OCI-LY7 (cell line): ENCODE measurements at regions of chr1 and their contacts with region 1.

Region 1: GRCh38 chr1:113677250-113678158 is 81.8 kb downstream of the PHTF1 start:
- DNase-seq: peak; percentile 56
- H3K4me3 ChIP-seq: no peak overlapping the region
- H3K27ac ChIP-seq: no peak overlapping the region
- H3K4me1 ChIP-seq: no peaks in the 10 kb centered on the region
- CTCF ChIP-seq: peak; percentile 90

Region 2: DNA sequence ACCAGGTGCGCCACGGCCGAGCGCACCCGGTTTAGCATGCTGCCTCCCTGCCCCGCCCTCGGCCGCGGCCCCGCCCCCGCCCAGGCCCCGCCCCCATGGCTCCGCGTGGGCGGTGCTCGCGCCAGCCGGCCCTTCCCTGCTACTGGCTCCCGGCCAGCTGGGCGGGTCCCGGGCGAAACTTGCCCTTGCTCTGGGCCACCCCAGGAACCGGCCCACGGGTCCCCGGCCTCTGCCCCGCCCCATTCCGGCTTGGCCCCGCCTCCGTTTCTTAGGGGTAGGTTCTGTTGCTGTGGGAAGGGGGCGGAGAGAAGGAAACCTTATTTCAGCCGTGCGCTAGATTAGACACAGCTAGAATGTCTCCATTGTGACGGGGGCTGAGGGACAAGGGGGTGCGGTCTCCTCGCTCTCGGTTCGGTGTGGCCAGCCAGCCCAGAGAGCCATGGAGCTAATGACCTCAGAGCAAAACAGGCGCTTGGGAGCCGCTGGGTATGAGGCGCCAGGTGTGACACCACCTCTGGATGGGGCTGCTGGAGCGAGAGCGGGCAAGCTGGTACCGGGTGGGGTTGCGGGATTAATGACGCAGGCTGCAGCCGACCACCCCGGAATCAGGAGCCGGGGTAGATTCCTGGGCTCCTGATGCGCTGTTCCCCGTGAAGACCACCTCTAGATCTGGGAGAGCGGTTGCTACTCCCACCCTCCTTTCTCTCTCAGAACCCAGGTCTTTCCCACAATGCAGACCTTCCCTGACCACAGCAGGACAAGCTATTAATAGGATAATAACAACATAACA is 962.0 kb before region 1 on chr1 and contains the start of gene PPM1J:
- CTCF ChIA-PET with region 1: no interaction called
- POLR2A ChIA-PET with region 1: no interaction called
- intact Hi-C with region 1: loop called (anchors 5 kb)
- DNase-seq: peak; percentile 94
- H3K4me3 ChIP-seq: peak within 1 kb of the TSS; percentile 78
- H3K27ac ChIP-seq: no peak within 1 kb of the TSS
- H3K4me1 ChIP-seq: peaks cover 20% of the 10 kb centered on the region
- CTCF ChIP-seq: no peak
- total RNA-seq, gene PPM1J: 1.4 and 1.5 TPM in 2 replicates

Region 3: DNA sequence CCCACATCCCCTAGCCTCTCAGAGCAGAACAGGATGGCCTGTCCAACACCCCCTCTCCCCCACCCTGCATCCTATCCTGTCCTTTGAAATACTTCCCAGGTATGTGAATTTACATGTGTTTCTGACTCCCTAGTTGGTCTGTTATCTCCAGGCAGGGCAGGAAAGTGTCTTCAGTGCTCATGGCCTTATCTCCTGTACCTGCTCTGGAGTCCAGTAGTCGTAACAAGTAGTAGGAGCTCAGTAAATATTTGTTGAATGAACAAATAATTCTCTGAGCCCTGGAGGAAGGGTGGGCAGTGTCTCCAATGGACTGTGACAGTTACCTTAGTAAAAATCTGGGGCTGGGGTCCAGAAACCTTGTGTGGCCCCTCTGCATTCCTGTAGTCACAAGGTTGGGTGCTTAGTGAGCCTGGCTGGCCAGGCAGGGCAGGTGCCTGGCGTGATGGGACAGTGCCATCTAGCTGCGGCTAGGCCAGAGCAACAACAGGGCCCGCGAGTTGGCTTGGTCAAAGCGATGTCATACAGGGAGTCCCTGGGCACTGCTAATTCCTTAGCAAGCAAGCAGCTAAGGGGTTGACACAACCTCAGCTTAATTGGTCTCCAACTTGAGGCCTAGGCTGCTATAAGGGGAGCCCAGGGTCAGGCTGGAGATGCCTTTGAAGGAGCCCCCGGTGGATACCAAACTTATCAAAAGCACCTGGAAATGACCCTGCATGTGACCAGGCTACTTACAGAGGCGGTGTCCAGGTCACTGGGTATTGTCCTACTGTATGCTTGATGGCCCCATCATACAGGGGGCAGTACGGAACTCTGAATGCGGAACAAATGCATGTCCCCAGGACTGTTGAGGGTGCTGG is 873.4 kb before region 1 on chr1:
- CTCF ChIA-PET with region 1: no interaction called
- POLR2A ChIA-PET with region 1: interaction called, 3 read pairs
- intact Hi-C with region 1: loop called (anchors 10 kb)
- DNase-seq: peak; percentile 63
- H3K4me3 ChIP-seq: no peak overlapping the region
- H3K27ac ChIP-seq: no peak overlapping the region
- H3K4me1 ChIP-seq: no peaks in the 10 kb centered on the region
- CTCF ChIP-seq: peak; percentile 82

Region 4: DNA sequence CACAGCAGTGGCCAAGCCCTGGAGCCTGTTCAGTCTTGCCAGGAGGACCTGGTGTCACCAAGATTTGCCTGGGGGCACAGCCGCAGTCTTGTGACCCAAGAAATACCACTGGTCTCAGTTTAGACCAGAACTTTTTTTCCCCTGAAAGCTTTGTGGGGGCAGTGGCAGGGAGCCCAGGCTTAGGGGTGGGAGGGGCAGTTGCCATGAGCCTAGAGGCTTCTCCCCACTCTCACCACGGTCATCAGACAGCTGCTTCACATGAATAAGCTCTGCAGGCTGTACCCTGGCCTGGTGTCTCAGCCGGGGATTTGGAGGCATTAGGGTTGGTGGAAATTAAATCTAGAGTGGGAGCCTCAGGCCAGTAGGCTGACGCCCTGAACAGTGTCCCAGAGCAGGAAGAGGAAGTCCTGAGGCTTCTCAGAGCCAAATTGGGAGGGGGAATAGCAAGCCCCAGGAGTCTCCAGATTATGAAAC is 795.2 kb before region 1 on chr1:
- CTCF ChIA-PET with region 1: no interaction called
- POLR2A ChIA-PET with region 1: no interaction called
- intact Hi-C with region 1: loop called (anchors 10 kb)
- DNase-seq: no peak
- H3K4me3 ChIP-seq: no peak overlapping the region
- H3K27ac ChIP-seq: no peak overlapping the region
- H3K4me1 ChIP-seq: no peaks in the 10 kb centered on the region
- CTCF ChIP-seq: no peak

Region 5: GRCh38 chr1:113140588-113141446 is 536.7 kb before region 1 on chr1:
- CTCF ChIA-PET with region 1: no interaction called
- POLR2A ChIA-PET with region 1: interaction called, 3 read pairs
- intact Hi-C with region 1: loop called (anchors 1 kb)
- DNase-seq: peak; percentile 66
- H3K4me3 ChIP-seq: no peak overlapping the region
- H3K27ac ChIP-seq: no peak overlapping the region
- H3K4me1 ChIP-seq: no peaks in the 10 kb centered on the region
- CTCF ChIP-seq: peak; percentile 96

Region 6: GRCh38 chr1:113605146-113605545 is 72.4 kb before region 1 on chr1:
- CTCF ChIA-PET with region 1: no interaction called
- POLR2A ChIA-PET with region 1: no interaction called
- intact Hi-C with region 1: no loop called
- DNase-seq: no peak
- H3K4me3 ChIP-seq: no peak overlapping the region
- H3K27ac ChIP-seq: no peak overlapping the region
- H3K4me1 ChIP-seq: no peaks in the 10 kb centered on the region
- CTCF ChIP-seq: no peak